Mammary epithelial cell (primary cell): ENCODE measurements at regions of chr5 and their contacts with region 1.

Region 1: DNA sequence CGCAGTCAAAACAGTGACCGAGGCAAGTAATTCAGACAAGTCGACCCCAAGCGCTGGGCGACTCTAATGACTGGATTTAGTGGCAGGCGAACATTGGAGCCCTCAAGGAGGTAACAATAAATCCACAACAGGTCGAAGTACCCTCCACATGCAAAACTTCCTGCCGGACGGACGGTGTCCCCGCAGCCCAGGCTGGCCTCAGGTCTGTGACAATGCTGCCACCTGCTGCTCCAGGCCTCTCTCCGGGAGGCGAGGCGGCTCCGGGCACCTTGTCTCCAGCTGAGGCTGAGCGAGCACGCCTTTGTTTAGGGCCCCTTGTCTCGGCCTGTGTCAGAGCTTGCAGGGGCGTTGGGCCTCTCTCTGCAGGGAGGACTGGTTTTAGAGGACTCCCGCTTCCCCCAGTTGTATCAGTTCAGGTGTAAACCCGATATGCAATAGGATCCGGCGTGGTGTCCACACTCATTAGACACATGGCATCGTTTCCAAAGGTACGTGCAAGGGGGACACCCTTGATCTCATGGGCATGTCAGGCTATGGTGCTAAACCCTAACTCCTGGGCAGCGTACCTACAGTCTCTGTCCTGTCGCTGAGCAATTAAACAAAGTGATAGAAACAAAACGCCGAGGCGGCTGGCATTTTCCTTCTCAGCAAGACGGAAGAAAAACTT is 628.0 kb upstream of the ADAMTS16 start:
- DNase-seq: peak; percentile 65
- H3K4me3 ChIP-seq: peak overlapping the region; percentile 6 to 31 (median 28)
- H3K27ac ChIP-seq: peak overlapping the region; percentile 34
- H3K4me1 ChIP-seq: peaks cover 56% of the 10 kb centered on the region
- H3K27me3 ChIP-seq: no peaks in the 10 kb centered on the region
- CTCF ChIP-seq: peak; percentile 72 to 89

Region 2: GRCh38 chr5:4019009-4019769 is 492.9 kb before region 1 on chr5:
- CTCF ChIA-PET with region 1: no interaction called
- dilution Hi-C with region 1: no loop called
- in situ Hi-C with region 1: no loop called
- intact Hi-C with region 1: no loop called
- DNase-seq: peak; percentile 81
- H3K4me3 ChIP-seq: no peak overlapping the region
- H3K27ac ChIP-seq: peak overlapping the region; percentile 60
- H3K4me1 ChIP-seq: peaks cover 13% of the 10 kb centered on the region
- H3K27me3 ChIP-seq: no peaks in the 10 kb centered on the region
- CTCF ChIP-seq: no peak

Region 3: DNA sequence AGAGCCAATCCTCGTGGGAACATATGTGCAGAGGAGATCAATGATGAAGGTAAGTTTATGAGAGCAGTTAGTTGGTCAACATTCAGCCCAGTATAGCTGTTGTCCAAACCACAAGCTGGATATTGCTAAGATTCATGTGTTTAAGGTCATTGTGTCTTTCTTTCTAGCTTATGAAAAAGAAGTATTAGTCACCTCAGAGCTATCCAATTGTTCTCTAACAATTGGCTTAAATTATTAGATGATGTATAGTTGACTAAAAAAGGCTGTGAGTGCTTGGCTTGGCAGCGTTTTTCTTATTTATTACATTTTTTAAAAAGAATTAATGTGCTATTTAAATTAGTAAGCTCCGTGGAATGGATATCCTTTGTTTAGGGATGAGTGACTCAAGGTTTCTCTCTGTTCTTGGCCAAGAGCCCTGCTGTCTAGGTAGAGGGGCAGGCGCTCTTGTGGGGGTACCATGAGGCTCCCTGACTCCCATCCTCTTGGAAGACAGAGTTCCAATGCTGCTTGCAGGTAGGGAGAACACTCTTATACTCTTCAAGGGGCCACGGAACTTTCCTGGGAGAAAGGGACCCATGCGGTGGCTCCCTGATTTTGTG is 429.1 kb before region 1 on chr5:
- CTCF ChIA-PET with region 1: no interaction called
- dilution Hi-C with region 1: no loop called
- in situ Hi-C with region 1: no loop called
- intact Hi-C with region 1: loop called (anchors 5 kb)
- DNase-seq: peak; percentile 94
- H3K4me3 ChIP-seq: no peak overlapping the region
- H3K27ac ChIP-seq: peak overlapping the region; percentile 96
- H3K4me1 ChIP-seq: peaks cover 43% of the 10 kb centered on the region
- H3K27me3 ChIP-seq: no peaks in the 10 kb centered on the region
- CTCF ChIP-seq: no peak

Region 4: DNA sequence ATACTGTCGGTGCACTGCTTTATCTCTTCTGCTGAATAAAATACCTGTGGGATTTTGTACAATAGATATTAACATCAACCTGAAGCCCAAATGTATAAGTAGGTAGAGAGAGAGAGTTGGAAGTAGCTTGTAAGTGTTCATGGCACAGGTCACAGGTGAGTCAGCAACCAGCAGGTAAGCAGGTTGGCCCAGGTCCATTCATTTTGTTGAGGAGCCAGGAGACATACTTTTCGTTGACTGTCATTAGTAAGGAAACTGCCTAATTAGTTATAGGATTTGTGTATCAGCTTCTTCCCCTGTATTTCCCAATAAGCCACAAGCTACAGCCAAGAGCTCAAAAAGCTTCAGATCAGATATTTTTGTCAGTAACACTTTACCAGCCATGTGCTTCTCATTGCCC is 265.7 kb before region 1 on chr5:
- CTCF ChIA-PET with region 1: no interaction called
- dilution Hi-C with region 1: no loop called
- in situ Hi-C with region 1: no loop called
- intact Hi-C with region 1: loop called (anchors 5 kb)
- DNase-seq: peak; percentile 83
- H3K4me3 ChIP-seq: no peak overlapping the region
- H3K27ac ChIP-seq: no peak overlapping the region
- H3K4me1 ChIP-seq: peaks cover 7% of the 10 kb centered on the region
- H3K27me3 ChIP-seq: no peaks in the 10 kb centered on the region
- CTCF ChIP-seq: no peak

Region 5: DNA sequence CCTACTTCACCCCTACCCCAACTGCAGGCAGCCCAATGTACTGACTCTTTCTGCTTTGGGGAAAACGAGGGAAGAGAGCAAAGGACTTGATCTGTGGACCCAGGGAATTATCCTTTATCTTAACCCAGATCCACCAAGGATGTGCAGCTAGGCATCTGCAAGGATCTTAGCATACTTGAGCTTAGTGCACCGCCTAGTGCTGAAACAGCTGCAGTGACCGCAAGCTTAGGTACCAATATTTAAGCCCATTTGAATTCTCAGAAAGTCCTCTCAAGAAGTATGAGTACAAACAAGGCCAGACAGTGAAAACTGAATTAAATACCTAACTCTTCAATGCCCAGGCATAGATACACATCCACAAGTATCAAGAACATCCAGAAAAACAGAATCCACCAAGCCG is 51.3 kb after region 1 on chr5:
- CTCF ChIA-PET with region 1: interaction called, 4 read pairs
- dilution Hi-C with region 1: no loop called
- in situ Hi-C with region 1: no loop called
- intact Hi-C with region 1: loop called (anchors 2 kb)
- DNase-seq: peak; percentile 50
- H3K4me3 ChIP-seq: no peak overlapping the region
- H3K27ac ChIP-seq: no peak overlapping the region
- H3K4me1 ChIP-seq: no peaks in the 10 kb centered on the region
- H3K27me3 ChIP-seq: no peaks in the 10 kb centered on the region
- CTCF ChIP-seq: peak; percentile 88 to 89